Sciatic nerve (tissue), 2 donors: ENCODE measurements at regions of chr5 and their contacts with region 1.

Region 1: GRCh38 chr5:149434162-149435014 is 55.3 kb upstream of the IL17B start:
- DNase-seq: peak; percentile 81
- ATAC-seq: peak; percentile 20

Region 2: GRCh38 chr5:149381987-149382340 is 52.4 kb before region 1 on chr5:
- intact Hi-C with region 1: loop called (anchors 5 kb)
- DNase-seq: peak; percentile 91
- ATAC-seq: peak; percentile 85